ENCODE measurements at regions of chr15 and their contacts with region 1.

Region 1: GRCh38 chr15:40754883-40755811 is at the start of gene RMDN3:
- DNase-seq: peak; percentile 97
- ATAC-seq: peak; percentile 92
- H3K4me3 Mint-ChIP-seq: peak within 1 kb of the TSS; percentile 91
- H3K27ac Mint-ChIP-seq: peak within 1 kb of the TSS; percentile 99
- H3K4me1 Mint-ChIP-seq: peaks cover 27% of the 10 kb centered on the region
- H3K27me3 Mint-ChIP-seq: no peaks in the 10 kb centered on the region
- total RNA-seq, gene RMDN3: 12.3 to 18.8 TPM

Region 2: GRCh38 chr15:40564591-40565332 is 190.4 kb before region 1 on chr15 and contains the start of gene CCDC32:
- CTCF ChIA-PET with region 1: no interaction called
- POLR2A ChIA-PET with region 1: no interaction called
- intact Hi-C with region 1: loop called in 1 of 2 experiments (anchors 1 kb)
- DNase-seq: peak; percentile 97
- ATAC-seq: peak; percentile 97
- H3K4me3 Mint-ChIP-seq: peak within 1 kb of the TSS; percentile 96
- H3K27ac Mint-ChIP-seq: peak within 1 kb of the TSS; percentile 93
- H3K4me1 Mint-ChIP-seq: peaks cover 44% of the 10 kb centered on the region
- H3K27me3 Mint-ChIP-seq: no peaks in the 10 kb centered on the region
- total RNA-seq, gene CCDC32: 14.2 to 24.5 TPM

Region 3: DNA sequence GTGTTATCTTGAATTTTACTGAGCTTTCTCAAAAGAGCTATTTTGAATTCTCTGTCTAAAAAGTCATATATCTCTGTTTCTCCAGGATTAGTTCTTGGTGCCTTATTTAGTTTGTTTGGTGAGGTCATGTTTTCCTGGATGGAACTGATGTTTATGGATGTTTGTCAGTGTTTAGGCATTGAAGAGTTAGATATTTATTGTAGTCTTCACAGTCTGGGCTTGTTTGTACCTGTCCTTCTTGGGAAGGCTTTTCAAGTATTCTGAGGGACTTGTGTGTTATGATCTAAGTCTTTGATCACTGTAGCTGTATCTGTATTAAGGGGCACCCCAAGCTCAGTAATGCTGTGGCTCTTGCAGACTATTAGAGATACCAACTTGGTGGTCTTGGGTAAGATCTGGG is 70.8 kb before region 1 on chr15:
- CTCF ChIA-PET with region 1: no interaction called
- POLR2A ChIA-PET with region 1: no interaction called
- intact Hi-C with region 1: loop called in 1 of 2 experiments (anchors 1 kb)
- DNase-seq: no peak
- ATAC-seq: no peak
- H3K4me3 Mint-ChIP-seq: no peak overlapping the region
- H3K27ac Mint-ChIP-seq: no peak overlapping the region
- H3K4me1 Mint-ChIP-seq: no peaks in the 10 kb centered on the region
- H3K27me3 Mint-ChIP-seq: no peaks in the 10 kb centered on the region

Region 4: DNA sequence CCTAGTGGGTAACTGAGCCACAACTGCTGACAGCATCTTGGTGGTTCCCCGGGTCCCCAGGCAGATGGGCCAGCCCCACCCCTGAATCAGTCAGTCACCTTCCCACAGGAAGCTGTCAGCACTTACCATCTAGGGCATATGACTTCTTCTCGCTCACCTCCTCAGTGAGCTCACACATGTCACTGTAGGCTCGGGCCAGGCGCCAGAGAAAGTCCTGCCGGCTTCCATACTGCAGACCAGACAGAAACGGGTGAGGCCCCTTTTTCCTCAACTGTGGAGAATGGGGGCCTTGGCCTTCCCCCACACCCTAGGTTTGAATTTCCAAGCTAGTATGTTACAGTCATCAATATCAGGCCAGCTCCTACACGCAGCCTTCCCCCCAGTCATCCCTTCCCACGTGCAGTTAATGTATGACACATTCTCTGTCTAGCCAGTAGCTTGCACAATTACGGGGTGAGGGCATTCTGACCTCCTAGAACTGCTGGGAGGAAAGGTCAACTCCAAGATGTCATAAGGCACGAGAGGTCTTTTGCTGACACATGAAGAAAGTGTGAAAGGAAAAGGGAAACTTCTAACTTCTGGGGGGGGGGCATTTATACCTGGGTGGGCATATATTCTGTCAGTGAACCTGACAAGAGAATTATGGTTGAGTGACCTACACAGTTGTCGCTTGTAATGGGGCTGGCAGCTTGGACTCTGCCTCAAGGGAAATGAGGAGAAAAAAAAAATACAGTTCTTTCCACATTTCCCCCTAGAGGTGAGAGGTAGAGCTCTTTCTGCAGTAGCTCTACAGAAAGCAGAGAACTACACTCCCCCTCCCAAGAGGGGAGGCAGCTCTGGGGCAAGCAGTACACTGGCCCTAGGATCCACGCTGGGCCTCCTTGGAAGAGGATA is 11.0 kb before region 1 on chr15:
- CTCF ChIA-PET with region 1: interaction called, 4 read pairs
- POLR2A ChIA-PET with region 1: no interaction called
- intact Hi-C with region 1: loop called in 1 of 2 experiments (anchors 1 kb)
- DNase-seq: peak; percentile 82
- ATAC-seq: peak; percentile 93
- H3K4me3 Mint-ChIP-seq: peak overlapping the region; percentile 4
- H3K27ac Mint-ChIP-seq: peak overlapping the region; percentile 71
- H3K4me1 Mint-ChIP-seq: peaks cover 25% of the 10 kb centered on the region
- H3K27me3 Mint-ChIP-seq: no peaks in the 10 kb centered on the region

Region 5: DNA sequence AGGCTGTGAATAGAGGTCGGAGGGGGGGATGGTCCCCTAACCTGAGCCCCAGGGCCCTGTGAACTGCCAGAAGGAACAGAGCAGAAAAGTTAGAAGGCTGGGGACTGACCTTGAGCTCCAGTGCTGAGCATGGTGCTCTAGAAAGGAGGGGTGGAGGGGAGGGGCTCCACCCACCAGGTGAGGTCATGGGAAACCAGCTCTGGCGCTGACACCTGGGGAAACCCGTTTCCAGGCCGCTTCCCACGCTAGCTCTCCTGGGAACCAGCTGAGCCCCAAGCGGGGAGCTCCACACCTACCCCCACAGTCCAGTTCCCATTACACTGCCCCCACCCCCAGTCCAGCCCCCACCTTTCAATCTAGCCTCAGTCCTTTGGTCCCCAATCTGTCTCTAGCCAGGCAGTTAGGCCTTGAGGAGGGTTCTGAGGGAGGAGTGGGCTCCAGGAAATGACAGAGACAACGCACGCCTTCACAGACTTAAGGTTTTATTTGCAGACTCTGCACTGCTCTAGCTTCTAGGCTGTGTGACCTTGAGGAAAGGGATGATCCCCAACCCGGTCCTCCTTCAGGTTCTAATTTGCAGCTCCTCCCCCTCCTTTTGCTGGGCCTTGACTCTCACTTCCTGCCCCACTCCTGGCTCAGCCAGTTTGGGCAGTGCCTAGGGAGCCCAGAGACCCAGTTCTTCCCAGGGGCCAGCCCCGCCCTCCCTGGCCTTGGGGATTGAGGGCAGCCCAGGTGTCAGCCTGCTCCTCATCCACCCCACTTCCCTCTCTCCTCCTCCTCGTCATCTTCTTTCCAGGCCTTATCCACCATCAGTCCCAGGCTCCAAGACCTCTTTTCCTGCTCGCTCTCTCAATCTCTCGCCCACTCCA is 116.8 kb after region 1 on chr15:
- CTCF ChIA-PET with region 1: no interaction called
- POLR2A ChIA-PET with region 1: no interaction called
- intact Hi-C with region 1: no loop called
- DNase-seq: peak; percentile 67
- ATAC-seq: peak; percentile 39
- H3K4me3 Mint-ChIP-seq: no peak overlapping the region
- H3K27ac Mint-ChIP-seq: no peak overlapping the region
- H3K4me1 Mint-ChIP-seq: peaks cover 21% of the 10 kb centered on the region
- H3K27me3 Mint-ChIP-seq: peaks cover 3% of the 10 kb centered on the region

Region 6: DNA sequence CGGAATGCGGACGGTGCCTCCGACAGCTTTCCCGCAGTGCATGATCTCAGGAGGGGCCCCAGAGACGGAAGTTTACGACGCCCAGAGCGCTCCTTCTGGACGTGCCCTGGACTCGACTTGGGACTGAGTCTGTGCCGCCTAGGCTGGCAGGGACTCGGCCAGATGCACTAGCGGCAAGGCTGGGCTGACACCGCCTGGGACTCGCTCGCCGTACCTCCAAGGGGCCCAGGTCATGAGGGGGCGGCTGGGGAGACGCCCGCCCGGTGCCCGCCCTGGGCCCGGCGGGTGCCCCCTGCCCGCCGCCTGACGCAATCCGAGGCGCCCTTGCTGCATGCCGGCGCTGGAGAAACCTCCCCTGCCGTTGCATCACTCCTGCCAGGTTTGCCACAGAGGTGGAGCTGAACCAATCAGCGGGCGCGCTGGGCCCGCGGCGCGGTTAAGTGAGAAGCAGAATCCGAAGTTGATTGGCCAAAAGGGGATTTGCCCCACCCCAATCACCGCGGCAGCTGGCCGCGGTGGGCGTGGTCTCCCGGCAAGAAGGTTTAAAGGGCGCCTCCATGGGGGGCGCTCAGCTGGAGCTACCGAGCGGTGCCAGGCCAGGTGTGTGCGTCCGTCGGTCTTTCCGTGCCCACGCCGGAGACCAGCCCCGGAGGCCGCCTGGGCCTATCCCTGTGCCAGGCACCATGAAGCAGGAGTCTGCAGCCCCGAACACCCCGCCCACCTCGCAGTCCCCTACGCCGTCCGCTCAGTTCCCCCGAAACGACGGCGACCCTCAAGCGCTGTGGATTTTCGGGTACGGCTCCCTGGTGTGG is 198.0 kb after region 1 on chr15 and contains the start of gene CHAC1:
- CTCF ChIA-PET with region 1: no interaction called
- POLR2A ChIA-PET with region 1: no interaction called
- intact Hi-C with region 1: loop called in 1 of 2 experiments (anchors 5 kb)
- DNase-seq: peak; percentile 99
- ATAC-seq: peak; percentile 92
- H3K4me3 Mint-ChIP-seq: peak within 1 kb of the TSS; percentile 93
- H3K27ac Mint-ChIP-seq: peak within 1 kb of the TSS; percentile 97
- H3K4me1 Mint-ChIP-seq: peaks cover 25% of the 10 kb centered on the region
- H3K27me3 Mint-ChIP-seq: peaks cover 2% of the 10 kb centered on the region
- total RNA-seq, gene CHAC1: 31.1 to 32.2 TPM

Region 7: DNA sequence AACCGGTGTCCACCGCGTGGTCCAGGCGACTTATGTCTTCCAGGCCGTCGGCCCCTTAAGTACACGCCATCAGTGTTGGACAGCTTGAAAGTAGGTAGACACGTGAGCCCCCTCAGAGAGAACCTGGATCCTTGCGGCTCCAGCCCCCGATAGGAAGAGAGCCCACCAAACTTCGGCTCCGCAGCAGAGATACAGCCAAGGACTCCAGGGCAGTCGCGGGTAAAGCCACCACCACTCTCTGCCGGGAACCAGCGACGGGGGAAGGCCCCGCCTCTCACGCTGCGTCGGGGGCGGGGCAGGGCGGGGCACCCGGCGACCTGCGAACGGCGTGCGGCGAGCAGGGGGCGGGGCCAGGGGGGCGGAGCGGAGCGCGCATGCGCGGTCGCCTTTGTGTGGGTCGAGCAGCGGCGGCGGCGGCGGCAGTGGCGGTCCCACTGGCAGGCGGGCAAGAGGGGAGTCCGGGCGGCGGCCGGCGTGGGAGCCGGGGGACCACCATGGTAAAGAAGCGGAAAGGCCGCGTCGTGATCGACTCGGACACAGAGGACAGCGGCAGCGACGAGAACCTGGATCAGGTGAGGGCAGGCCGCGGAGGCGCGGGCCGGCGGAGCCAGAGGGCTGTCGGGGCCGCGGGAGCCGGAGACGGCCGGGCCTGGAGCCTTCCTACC is 661.7 kb after region 1 on chr15 and contains the start of gene RTF1:
- CTCF ChIA-PET with region 1: no interaction called
- POLR2A ChIA-PET with region 1: no interaction called
- intact Hi-C with region 1: loop called in 1 of 2 experiments (anchors 1 kb)
- DNase-seq: peak; percentile 98
- ATAC-seq: peak; percentile 94
- H3K4me3 Mint-ChIP-seq: peak within 1 kb of the TSS; percentile 88
- H3K27ac Mint-ChIP-seq: peak within 1 kb of the TSS; percentile 92
- H3K4me1 Mint-ChIP-seq: peaks cover 38% of the 10 kb centered on the region
- H3K27me3 Mint-ChIP-seq: no peaks in the 10 kb centered on the region
- total RNA-seq, gene RTF1: 29.4 to 32.3 TPM

Measured in activated CD4-positive, alpha-beta T cell treated with anti-CD3 and anti-CD28 coated beads for 36 hours (primary cell).